ENCODE measurements at regions of chr22 and their contacts with region 1.

Region 1: GRCh38 chr22:21712894-21713712 is 22.5 kb downstream of the YPEL1 start:
- DNase-seq: peak; percentile 63
- H3K4me3 ChIP-seq: no peak overlapping the region
- H3K27ac ChIP-seq: no peak overlapping the region
- H3K4me1 ChIP-seq: no peaks in the 10 kb centered on the region
- H3K27me3 ChIP-seq: no peaks in the 10 kb centered on the region
- CTCF ChIP-seq: peak in 3 of 4 experiments; percentile 77 to 79 (median 79)
- POLR2A ChIP-seq: no peak

Region 2: GRCh38 chr22:21567456-21568346 is 145.4 kb before region 1 on chr22 and contains the start of gene UBE2L3:
- intact Hi-C with region 1: no loop called
- DNase-seq: peak; percentile 75
- H3K4me3 ChIP-seq: peak within 1 kb of the TSS; percentile 84 to 94
- H3K27ac ChIP-seq: peak within 1 kb of the TSS; percentile 91 to 92
- H3K4me1 ChIP-seq: peaks cover 6% of the 10 kb centered on the region
- H3K27me3 ChIP-seq: no peaks in the 10 kb centered on the region
- CTCF ChIP-seq: peak in 1 of 4 experiments; percentile 33
- POLR2A ChIP-seq: peak; percentile 62
- total RNA-seq, gene UBE2L3: 61.7 to 78.1 TPM

Region 3: GRCh38 chr22:21889251-21889990 is 176.3 kb after region 1 on chr22:
- intact Hi-C with region 1: no loop called
- DNase-seq: no peak
- H3K4me3 ChIP-seq: no peak overlapping the region
- H3K27ac ChIP-seq: no peak overlapping the region
- H3K4me1 ChIP-seq: no peaks in the 10 kb centered on the region
- H3K27me3 ChIP-seq: no peaks in the 10 kb centered on the region
- CTCF ChIP-seq: no peak
- POLR2A ChIP-seq: no peak

Region 4: DNA sequence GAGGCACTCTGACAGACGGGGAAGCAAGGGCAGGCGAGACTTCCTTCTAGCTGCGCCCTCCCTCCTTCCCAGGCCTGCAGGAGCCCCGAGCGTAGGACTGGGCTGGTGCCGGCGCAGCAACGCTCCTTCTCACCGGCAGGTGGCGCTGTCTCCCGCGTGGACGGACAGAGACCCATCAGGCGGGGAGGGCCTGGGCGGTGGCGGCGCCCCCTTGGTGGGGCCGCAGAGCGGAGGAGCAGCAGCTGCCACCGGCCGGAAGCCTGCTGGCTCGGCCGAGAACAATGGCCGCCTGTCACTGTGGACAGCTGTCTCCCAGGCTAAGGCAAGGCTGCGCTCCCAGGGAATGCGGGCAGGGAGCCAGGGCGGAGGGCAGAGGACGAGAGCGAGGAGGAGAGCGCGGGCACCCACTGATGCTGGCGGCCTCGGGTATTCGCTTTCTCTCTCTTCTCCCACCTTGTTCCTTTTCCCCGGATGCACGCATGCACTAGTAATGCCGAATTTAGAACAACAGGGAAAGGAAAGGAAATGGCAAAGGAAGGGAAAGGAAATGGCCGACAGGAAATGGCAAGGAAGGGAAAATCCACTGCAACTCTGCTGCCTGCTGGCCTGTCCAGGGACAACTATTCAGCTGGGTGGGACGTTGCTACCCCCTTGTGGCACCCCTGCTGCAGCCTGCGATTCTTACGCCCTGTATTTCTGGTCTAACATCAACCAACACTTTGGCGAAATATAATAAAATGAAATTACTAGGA is 225.1 kb after region 1 on chr22:
- intact Hi-C with region 1: loop called (anchors 1 kb)
- DNase-seq: peak; percentile 89
- H3K4me3 ChIP-seq: peak overlapping the region; percentile 51 to 60
- H3K27ac ChIP-seq: peak overlapping the region; percentile 90
- H3K4me1 ChIP-seq: peaks cover 16% of the 10 kb centered on the region
- H3K27me3 ChIP-seq: no peaks in the 10 kb centered on the region
- CTCF ChIP-seq: peak; percentile 97 to 99 (median 99)
- POLR2A ChIP-seq: no peak

Region 5: GRCh38 chr22:21952586-21953571 is 239.8 kb after region 1 on chr22 and contains the start of gene PPM1F:
- intact Hi-C with region 1: loop called (anchors 2 kb)
- DNase-seq: peak; percentile 80
- H3K4me3 ChIP-seq: peak within 1 kb of the TSS; percentile 57 to 63
- H3K27ac ChIP-seq: peak within 1 kb of the TSS; percentile 53 to 68
- H3K4me1 ChIP-seq: no peaks in the 10 kb centered on the region
- H3K27me3 ChIP-seq: no peaks in the 10 kb centered on the region
- CTCF ChIP-seq: peak; percentile 90 to 99 (median 98)
- POLR2A ChIP-seq: peak; percentile 52
- total RNA-seq, gene PPM1F: 16.8 to 31.6 TPM

Measured in prostate gland (tissue), 2 donors.